Activated CD4-positive, alpha-beta T cell treated with anti-CD3 and anti-CD28 coated beads, Interleukin-2, amount 10 ng/mL, durations not matched to agents 7 days and 5 days (primary cell): ENCODE measurements at regions of chr5 and their contacts with region 1.

Region 1: GRCh38 chr5:98923966-98924365 is 4.8 kb downstream of the CHD1 start:
- DNase-seq: no peak
- H3K4me3 Mint-ChIP-seq: no peak overlapping the region
- H3K27ac Mint-ChIP-seq: no peak overlapping the region
- H3K4me1 Mint-ChIP-seq: peaks cover 62% of the 10 kb centered on the region
- H3K27me3 Mint-ChIP-seq: no peaks in the 10 kb centered on the region

Region 2: DNA sequence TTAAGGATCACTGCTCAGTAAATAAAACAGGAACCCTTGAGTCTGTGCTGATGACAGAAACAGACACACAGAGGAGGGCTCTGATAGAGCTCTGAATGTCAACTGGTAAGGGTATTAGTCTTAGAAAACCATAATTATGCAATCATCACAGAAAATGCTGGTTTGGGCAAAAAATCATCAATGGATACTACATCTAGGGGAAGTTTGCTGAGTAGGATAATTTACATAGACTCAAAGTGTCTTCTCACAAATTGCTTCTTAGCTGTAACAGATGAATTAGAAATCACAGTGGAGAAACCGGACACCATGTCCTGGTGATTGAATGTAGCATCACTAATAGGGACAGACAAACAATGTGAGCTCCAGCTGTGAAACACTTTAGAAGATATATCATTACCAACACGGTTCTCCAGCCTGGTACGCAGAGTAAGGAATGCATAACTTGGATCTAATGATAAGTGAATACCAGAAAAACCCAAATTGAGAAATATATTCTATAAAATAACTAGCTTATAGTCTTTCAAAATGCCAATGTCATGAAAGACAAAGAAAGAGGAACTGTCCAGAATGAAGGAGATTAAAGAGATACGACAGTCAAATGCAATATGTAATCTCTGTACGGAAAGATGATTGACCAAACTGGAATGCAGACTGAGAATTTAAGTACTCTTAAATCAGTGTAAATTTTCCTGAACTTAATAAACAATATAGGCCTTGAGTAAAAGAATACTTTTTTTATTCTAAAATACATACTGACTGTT is 12.5 kb before region 1 on chr5:
- CTCF ChIA-PET with region 1: interaction called, 14 read pairs
- POLR2A ChIA-PET with region 1: interaction called, 10 read pairs
- DNase-seq: no peak
- H3K4me3 Mint-ChIP-seq: no peak overlapping the region
- H3K27ac Mint-ChIP-seq: no peak overlapping the region
- H3K4me1 Mint-ChIP-seq: peaks cover 44% of the 10 kb centered on the region
- H3K27me3 Mint-ChIP-seq: no peaks in the 10 kb centered on the region